WTC11 (cell line): ENCODE measurements at regions of chr18 and their contacts with region 1.

Region 1: DNA sequence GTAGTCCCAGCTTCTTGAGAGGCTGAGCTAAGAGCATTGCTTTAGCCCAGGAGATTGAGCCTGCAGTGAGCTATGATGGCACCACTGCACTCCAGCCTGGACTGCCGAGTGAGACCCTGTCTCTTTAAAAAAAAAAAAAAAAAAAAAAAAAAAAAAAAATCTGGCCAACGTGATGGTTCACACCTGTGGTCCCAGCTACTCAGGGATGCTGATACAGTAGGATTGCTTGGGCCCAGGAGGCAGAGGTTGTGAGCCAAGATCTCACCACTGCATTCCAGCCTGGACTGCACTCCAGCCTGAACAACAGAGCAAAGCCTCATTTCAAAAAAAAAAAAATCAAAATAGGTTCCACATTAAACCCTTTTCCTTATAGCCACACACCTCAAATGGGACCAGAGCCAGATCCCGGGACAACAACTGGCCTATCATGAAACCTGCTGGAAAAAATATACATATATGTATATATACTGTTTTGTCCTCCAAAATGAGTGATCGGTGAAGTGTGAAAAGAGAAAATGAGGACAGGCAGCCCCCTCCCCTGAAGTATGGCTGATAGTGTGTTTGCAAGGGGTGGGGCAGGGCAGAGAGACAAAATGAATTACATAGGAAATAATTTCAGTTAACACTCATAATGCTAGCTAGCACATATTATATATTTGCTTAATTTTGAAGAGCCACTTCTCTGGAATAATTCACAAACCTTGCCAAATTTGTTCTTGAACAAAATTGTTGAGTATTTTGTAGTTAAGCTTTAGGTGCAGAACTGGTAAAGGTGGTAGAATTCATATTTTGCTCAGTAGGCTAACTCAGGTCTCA is 22.9 kb downstream of the MAPRE2 start:
- DNase-seq: no peak
- ATAC-seq: no peak
- H3K4me3 Mint-ChIP-seq: no peak overlapping the region
- H3K27ac Mint-ChIP-seq: no peak overlapping the region
- H3K4me1 Mint-ChIP-seq: peaks cover 30% of the 10 kb centered on the region
- H3K27me3 Mint-ChIP-seq: no peaks in the 10 kb centered on the region
- CTCF ChIP-seq: no peak

Region 2: DNA sequence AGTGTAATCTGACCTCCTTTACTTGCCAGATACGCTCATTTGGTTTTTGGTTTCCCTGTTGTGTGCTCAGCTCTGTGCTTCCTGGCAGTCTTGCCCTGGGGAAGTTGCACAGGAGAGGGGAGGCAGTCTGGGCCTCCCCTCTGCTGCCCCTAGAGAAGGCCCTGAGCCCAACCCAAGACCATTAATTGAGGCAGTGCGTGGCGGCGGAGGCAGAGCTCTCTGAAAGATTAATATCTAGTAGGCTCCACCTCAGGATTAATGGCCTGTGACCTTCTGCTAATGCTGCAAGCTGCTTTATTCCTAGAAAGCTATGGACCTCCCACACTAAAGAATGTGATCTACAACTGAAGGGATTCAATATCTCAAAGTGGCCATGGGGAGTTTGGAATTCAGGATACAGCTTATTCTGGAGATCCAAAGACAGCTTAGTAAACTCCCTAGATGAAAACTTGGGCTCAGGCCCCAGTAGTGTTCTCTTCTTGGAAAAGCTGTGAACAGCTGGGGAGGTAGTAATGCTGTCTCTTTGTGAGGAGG is 64.3 kb before region 1 on chr18:
- CTCF ChIA-PET with region 1: no interaction called
- POLR2A ChIA-PET with region 1: interaction called, 10 read pairs
- DNase-seq: no peak
- ATAC-seq: peak; percentile 72
- H3K4me3 Mint-ChIP-seq: no peak overlapping the region
- H3K27ac Mint-ChIP-seq: no peak overlapping the region
- H3K4me1 Mint-ChIP-seq: peaks cover 23% of the 10 kb centered on the region
- H3K27me3 Mint-ChIP-seq: 0 out of 2 replicates have a peak, but pooled peaks cover 3% of the 10 kb centered on the region
- CTCF ChIP-seq: no peak